ENCODE measurements at regions of chr17 and their contacts with region 1.

Region 1: DNA sequence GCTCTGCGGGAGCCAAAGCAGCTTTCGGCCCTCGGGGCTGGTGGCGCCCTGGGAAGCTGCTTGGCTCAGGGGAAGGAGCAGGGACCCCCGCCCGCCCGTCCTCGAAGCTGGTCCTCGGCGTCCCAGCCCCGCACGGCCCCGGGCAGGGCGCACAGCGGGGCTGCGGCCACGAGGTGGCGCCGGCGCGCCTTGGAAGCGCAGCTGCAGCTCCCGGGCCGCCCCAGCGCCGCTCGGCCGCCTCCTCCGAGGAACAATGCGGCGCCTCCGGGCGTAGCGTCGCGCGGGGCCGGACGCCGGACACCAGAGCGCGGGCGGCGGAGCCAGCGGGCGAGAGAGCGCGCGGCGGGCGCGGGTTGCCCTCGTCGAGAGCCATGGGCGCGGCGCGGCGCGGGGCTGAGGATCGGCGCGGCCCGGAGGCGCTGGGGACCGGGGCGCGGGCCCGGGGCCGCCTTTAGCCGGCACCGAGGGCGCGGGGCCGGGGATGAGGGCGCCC is at the start of gene MGAT5B:
- DNase-seq: no peak
- ATAC-seq: peak; percentile 80
- H3K4me3 ChIP-seq: peak within 1 kb of the TSS; percentile 65 to 73
- H3K27ac ChIP-seq: peak within 1 kb of the TSS; percentile 78
- H3K4me1 ChIP-seq: peaks cover 42% of the 10 kb centered on the region
- H3K27me3 ChIP-seq: no peaks in the 10 kb centered on the region
- CTCF ChIP-seq: peak; percentile 99
- total RNA-seq, gene MGAT5B: 34.9 TPM

Region 2: DNA sequence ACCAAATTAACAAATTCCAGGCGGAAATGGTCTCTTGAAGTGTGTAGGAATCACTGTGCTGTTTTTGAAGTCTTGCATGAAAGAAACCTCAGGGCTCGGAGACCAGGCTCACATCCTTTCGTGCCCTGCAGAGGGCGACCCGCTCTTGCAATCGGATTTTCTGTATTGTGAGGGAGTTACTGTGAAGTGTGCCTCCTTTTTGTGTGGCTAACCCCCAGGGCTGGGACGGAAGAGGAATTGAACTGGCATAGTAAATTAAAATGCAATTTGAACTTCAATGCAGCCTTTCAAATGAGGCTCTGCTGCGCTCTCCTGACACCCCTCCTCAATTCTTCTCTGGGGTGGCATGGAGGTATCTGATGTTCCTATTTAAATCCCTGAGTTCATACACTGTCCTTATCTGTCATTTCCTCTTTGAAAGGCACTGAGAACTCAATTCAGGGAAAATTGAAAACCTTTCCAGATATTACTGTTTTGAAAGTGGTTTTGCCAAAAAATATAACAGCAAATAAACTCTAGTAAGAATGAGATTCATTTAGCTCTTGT is 51.6 kb before region 1 on chr17:
- CTCF ChIA-PET with region 1: interaction called, 4 read pairs
- POLR2A ChIA-PET with region 1: no interaction called
- in situ Hi-C with region 1: no loop called
- intact Hi-C with region 1: loop called (anchors 2 kb)
- DNase-seq: peak; percentile 24
- ATAC-seq: peak; percentile 87
- H3K4me3 ChIP-seq: no peak overlapping the region
- H3K27ac ChIP-seq: no peak overlapping the region
- H3K4me1 ChIP-seq: no peaks in the 10 kb centered on the region
- H3K27me3 ChIP-seq: no peaks in the 10 kb centered on the region
- CTCF ChIP-seq: peak; percentile 93

Region 3: GRCh38 chr17:76848670-76849069 is 19.6 kb before region 1 on chr17:
- CTCF ChIA-PET with region 1: interaction called, 17 read pairs
- POLR2A ChIA-PET with region 1: no interaction called
- in situ Hi-C with region 1: no loop called
- intact Hi-C with region 1: no loop called
- DNase-seq: no peak
- ATAC-seq: no peak
- H3K4me3 ChIP-seq: no peak overlapping the region
- H3K27ac ChIP-seq: no peak overlapping the region
- H3K4me1 ChIP-seq: no peaks in the 10 kb centered on the region
- H3K27me3 ChIP-seq: no peaks in the 10 kb centered on the region
- CTCF ChIP-seq: no peak

Region 4: DNA sequence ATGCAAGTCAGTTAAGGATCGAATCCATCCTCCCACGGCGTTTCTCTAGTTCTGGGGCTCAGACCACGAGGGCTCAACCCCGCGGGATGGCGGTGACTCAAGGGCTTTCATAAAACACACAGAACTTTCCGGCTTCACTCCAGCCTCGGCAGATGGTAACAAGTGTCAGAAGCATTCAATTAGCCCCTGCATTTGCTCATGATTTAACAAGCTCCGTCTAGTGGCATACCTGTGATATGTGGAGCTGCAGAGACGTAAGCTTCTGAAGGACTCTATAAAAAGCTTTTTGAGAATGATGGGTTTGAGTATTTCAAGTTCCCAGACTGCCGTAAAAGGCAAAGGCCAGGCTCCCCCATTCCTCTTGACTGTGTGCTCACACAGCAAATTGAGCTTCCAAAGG is 181.2 kb after region 1 on chr17:
- CTCF ChIA-PET with region 1: interaction called, 10 read pairs
- POLR2A ChIA-PET with region 1: no interaction called
- in situ Hi-C with region 1: no loop called
- intact Hi-C with region 1: no loop called
- DNase-seq: no peak
- ATAC-seq: no peak
- H3K4me3 ChIP-seq: no peak overlapping the region
- H3K27ac ChIP-seq: no peak overlapping the region
- H3K4me1 ChIP-seq: no peaks in the 10 kb centered on the region
- H3K27me3 ChIP-seq: no peaks in the 10 kb centered on the region
- CTCF ChIP-seq: no peak

Region 5: DNA sequence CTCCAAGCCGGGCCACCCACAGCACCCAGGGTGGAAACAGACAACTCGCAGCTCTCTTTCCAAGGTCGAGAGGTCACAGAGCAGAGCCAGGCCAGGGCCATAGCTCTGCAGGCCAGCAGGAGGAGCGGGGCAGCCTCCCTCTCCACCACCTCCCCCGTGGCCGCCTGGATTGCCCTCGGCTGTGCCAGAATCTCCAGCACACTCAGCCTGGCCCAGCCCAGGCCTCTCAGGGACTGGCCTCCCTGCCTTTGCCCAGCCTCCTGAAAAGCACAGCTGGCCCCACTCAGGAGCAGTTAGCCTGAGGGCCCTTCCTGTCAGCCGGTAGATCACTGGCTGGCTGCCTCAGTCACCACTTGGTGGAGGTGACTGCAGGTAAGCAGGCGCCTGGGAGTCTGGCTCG is 186.7 kb after region 1 on chr17:
- CTCF ChIA-PET with region 1: interaction called, 18 read pairs
- POLR2A ChIA-PET with region 1: interaction called, 5 read pairs
- in situ Hi-C with region 1: no loop called
- intact Hi-C with region 1: loop called (anchors 2 kb)
- DNase-seq: no peak
- ATAC-seq: peak; percentile 41
- H3K4me3 ChIP-seq: no peak overlapping the region
- H3K27ac ChIP-seq: no peak overlapping the region
- H3K4me1 ChIP-seq: no peaks in the 10 kb centered on the region
- H3K27me3 ChIP-seq: no peaks in the 10 kb centered on the region
- CTCF ChIP-seq: no peak